OCI-LY7 (cell line): ENCODE measurements at regions of chr1 and their contacts with region 1.

Region 1: GRCh38 chr1:107804134-107804533 is 160.8 kb downstream of the VAV3 start:
- DNase-seq: peak; percentile 64
- H3K4me3 ChIP-seq: peak overlapping the region; percentile 46
- H3K27ac ChIP-seq: peak overlapping the region; percentile 52
- H3K4me1 ChIP-seq: peaks cover 41% of the 10 kb centered on the region
- CTCF ChIP-seq: no peak

Region 2: GRCh38 chr1:106620521-106620954 is 1183.6 kb before region 1 on chr1:
- CTCF ChIA-PET with region 1: no interaction called
- POLR2A ChIA-PET with region 1: no interaction called
- intact Hi-C with region 1: no loop called
- DNase-seq: no peak
- H3K4me3 ChIP-seq: no peak overlapping the region
- H3K27ac ChIP-seq: no peak overlapping the region
- H3K4me1 ChIP-seq: no peaks in the 10 kb centered on the region
- CTCF ChIP-seq: no peak

Region 3: DNA sequence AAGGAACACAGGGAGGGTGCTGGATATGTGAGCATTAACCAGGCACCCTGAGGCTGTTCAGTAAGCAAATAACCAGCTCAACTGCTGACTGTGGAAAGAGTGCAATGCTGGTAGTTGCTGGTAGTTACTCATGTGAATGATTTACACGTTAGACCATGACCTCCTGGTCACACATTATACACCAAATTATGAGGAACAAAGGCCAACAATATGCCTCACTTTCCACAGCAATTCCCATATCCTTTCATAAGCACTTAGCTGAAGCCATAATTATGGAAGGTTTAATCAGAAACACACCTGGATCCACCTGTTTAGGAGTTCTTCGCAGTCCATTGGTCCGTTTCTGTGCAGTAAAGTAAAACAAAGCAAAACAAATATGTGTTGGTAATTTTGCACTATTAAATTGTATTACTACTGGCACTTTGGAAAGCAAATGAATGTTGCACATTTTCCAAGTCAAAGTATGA is 120.9 kb before region 1 on chr1:
- CTCF ChIA-PET with region 1: no interaction called
- POLR2A ChIA-PET with region 1: no interaction called
- intact Hi-C with region 1: no loop called
- DNase-seq: no peak
- H3K4me3 ChIP-seq: no peak overlapping the region
- H3K27ac ChIP-seq: no peak overlapping the region
- H3K4me1 ChIP-seq: peaks cover 8% of the 10 kb centered on the region
- CTCF ChIP-seq: no peak

Region 4: GRCh38 chr1:107820805-107821204 is 16.7 kb after region 1 on chr1:
- CTCF ChIA-PET with region 1: no interaction called
- POLR2A ChIA-PET with region 1: no interaction called
- intact Hi-C with region 1: no loop called
- DNase-seq: no peak
- H3K4me3 ChIP-seq: no peak overlapping the region
- H3K27ac ChIP-seq: no peak overlapping the region
- H3K4me1 ChIP-seq: no peaks in the 10 kb centered on the region
- CTCF ChIP-seq: no peak

Region 5: DNA sequence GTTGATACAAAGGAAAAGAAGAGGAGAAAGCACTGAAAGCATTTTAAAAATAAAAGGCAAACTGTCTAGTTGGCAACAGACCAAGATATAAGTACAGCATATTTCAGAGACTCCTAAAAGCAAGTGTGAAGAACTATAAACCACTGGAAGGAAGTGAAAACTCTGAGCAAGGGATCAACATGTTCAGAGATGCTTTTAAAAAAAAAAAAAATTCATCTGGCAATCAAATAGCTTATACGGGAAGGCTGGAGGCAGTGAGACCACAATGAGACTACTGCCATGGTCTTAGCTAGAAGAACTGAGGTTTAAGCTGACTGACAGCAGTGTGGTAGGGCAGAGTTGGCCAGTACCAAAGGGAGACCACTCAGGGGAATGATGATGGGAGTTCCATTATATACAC is 36.6 kb after region 1 on chr1:
- CTCF ChIA-PET with region 1: no interaction called
- POLR2A ChIA-PET with region 1: interaction called, 3 read pairs
- intact Hi-C with region 1: loop called (anchors 5 kb)
- DNase-seq: peak; percentile 41
- H3K4me3 ChIP-seq: no peak overlapping the region
- H3K27ac ChIP-seq: no peak overlapping the region
- H3K4me1 ChIP-seq: peaks cover 49% of the 10 kb centered on the region
- CTCF ChIP-seq: no peak

Region 6: GRCh38 chr1:108075055-108075454 is 270.9 kb after region 1 on chr1:
- CTCF ChIA-PET with region 1: no interaction called
- POLR2A ChIA-PET with region 1: no interaction called
- intact Hi-C with region 1: loop called (anchors 5 kb)
- DNase-seq: peak; percentile 68
- H3K4me3 ChIP-seq: peak overlapping the region; percentile 17
- H3K27ac ChIP-seq: peak overlapping the region; percentile 49
- H3K4me1 ChIP-seq: peaks cover 45% of the 10 kb centered on the region
- CTCF ChIP-seq: no peak